Caco-2 (cell line): ENCODE measurements at regions of chr7 and their contacts with region 1.

Region 1: GRCh38 chr7:6435486-6436384 is 12.0 kb downstream of the DAGLB start:
- DNase-seq: peak; percentile 78 to 89
- H3K4me3 ChIP-seq: no peak overlapping the region
- H3K4me3 Mint-ChIP-seq: no peak overlapping the region
- H3K27ac Mint-ChIP-seq: no peak overlapping the region
- H3K4me1 ChIP-seq: no peaks in the 10 kb centered on the region
- H3K4me1 Mint-ChIP-seq: no peaks in the 10 kb centered on the region
- H3K27me3 ChIP-seq: no peaks in the 10 kb centered on the region
- H3K27me3 Mint-ChIP-seq: no peaks in the 10 kb centered on the region
- CTCF ChIP-seq: peak; percentile 96 to 97

Region 2: GRCh38 chr7:6385110-6385971 is 50.4 kb before region 1 on chr7:
- CTCF ChIA-PET with region 1: no interaction called
- POLR2A ChIA-PET with region 1: interaction called, 9 read pairs
- intact Hi-C with region 1: loop called (anchors 10 kb)
- DNase-seq: peak in 1 of 2 experiments; percentile 69
- H3K4me3 ChIP-seq: no peak overlapping the region
- H3K4me3 Mint-ChIP-seq: peak overlapping the region; percentile 36
- H3K27ac Mint-ChIP-seq: peak overlapping the region; percentile 81
- H3K4me1 ChIP-seq: peaks cover 35% of the 10 kb centered on the region
- H3K4me1 Mint-ChIP-seq: peaks cover 17% of the 10 kb centered on the region
- H3K27me3 ChIP-seq: no peaks in the 10 kb centered on the region
- H3K27me3 Mint-ChIP-seq: no peaks in the 10 kb centered on the region
- CTCF ChIP-seq: no peak